Mammary epithelial cell (primary cell): ENCODE measurements at regions of chr15 and their contacts with region 1.

Region 1: GRCh38 chr15:61216519-61216918 is 12.6 kb downstream of the RORA start:
- DNase-seq: no peak
- H3K4me3 ChIP-seq: no peak overlapping the region
- H3K27ac ChIP-seq: no peak overlapping the region
- H3K4me1 ChIP-seq: no peaks in the 10 kb centered on the region
- H3K27me3 ChIP-seq: no peaks in the 10 kb centered on the region
- CTCF ChIP-seq: peak in 1 of 2 donors; percentile 49

Region 2: GRCh38 chr15:61169904-61170695 is 46.4 kb before region 1 on chr15:
- CTCF ChIA-PET with region 1: interaction called, 13 read pairs
- dilution Hi-C with region 1: no loop called
- in situ Hi-C with region 1: no loop called
- intact Hi-C with region 1: no loop called
- DNase-seq: no peak
- H3K4me3 ChIP-seq: no peak overlapping the region
- H3K27ac ChIP-seq: no peak overlapping the region
- H3K4me1 ChIP-seq: no peaks in the 10 kb centered on the region
- H3K27me3 ChIP-seq: no peaks in the 10 kb centered on the region
- CTCF ChIP-seq: no peak